ENCODE measurements at regions of chr6 and their contacts with region 1.

Region 1: DNA sequence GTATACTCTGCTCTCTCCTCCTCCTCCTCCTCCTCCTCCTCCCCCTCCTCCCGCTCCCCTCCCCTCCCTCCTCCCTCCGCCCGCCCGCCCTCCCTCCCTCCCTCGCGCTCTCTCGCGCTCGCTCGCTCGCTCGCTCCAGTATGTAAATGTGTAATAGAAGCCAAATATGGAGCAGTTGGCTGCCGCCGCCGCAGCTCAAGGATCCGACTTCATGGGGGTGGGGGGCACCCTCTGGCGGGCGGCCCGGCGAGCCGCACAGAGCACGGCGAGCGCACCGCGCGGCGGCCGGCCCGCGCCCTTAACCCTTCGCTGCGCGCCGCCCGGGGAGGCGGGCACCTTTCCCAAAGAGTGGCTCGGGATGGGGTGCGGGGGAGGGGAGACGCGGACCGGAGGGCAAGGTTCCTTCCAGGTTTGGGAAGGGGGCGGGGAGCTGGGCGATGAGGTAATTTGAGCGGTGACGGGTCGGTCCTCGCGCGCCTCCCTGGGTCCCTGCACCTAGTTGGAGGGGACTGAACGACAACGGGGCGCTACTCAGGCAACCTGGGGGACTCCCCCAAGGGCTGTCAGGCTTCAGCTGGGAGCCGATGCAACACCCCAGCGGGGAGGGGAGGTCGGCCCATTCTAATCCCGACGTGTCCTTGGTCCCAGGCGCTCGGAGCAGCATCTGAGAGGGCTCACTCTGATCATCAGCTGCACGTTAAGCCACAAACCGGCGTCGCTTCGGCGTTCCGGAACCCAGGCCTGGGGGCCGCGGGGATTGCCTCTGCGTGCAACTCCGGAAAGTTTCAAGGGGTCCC is 409 bp upstream of the ATXN1 start:
- DNase-seq: peak; percentile 90
- ATAC-seq: peak; percentile 64
- H3K4me3 Mint-ChIP-seq: peak overlapping the region; percentile 99
- H3K27ac Mint-ChIP-seq: peak overlapping the region; percentile 97
- H3K4me1 Mint-ChIP-seq: peaks cover 60% of the 10 kb centered on the region
- H3K27me3 Mint-ChIP-seq: no peaks in the 10 kb centered on the region

Region 2: GRCh38 chr6:16319813-16320532 is 441.7 kb before region 1 on chr6:
- CTCF ChIA-PET with region 1: interaction called, 24 read pairs
- POLR2A ChIA-PET with region 1: interaction called, 6 read pairs
- DNase-seq: peak; percentile 79
- ATAC-seq: peak; percentile 79
- H3K4me3 Mint-ChIP-seq: peak overlapping the region; percentile 61
- H3K27ac Mint-ChIP-seq: peak overlapping the region; percentile 94
- H3K4me1 Mint-ChIP-seq: peaks cover 76% of the 10 kb centered on the region
- H3K27me3 Mint-ChIP-seq: no peaks in the 10 kb centered on the region

Region 3: GRCh38 chr6:16420715-16421461 is 340.8 kb before region 1 on chr6:
- CTCF ChIA-PET with region 1: interaction called, 20 read pairs
- POLR2A ChIA-PET with region 1: interaction called, 4 read pairs
- DNase-seq: peak; percentile 46
- ATAC-seq: peak; percentile 90
- H3K4me3 Mint-ChIP-seq: peak overlapping the region; percentile 60
- H3K27ac Mint-ChIP-seq: peak overlapping the region; percentile 95
- H3K4me1 Mint-ChIP-seq: peaks cover 46% of the 10 kb centered on the region
- H3K27me3 Mint-ChIP-seq: no peaks in the 10 kb centered on the region

Region 4: GRCh38 chr6:16481697-16482399 is 279.8 kb before region 1 on chr6:
- CTCF ChIA-PET with region 1: interaction called, 12 read pairs
- POLR2A ChIA-PET with region 1: interaction called, 20 read pairs
- DNase-seq: peak; percentile 83
- ATAC-seq: peak; percentile 78
- H3K4me3 Mint-ChIP-seq: peak overlapping the region; percentile 26
- H3K27ac Mint-ChIP-seq: peak overlapping the region; percentile 93
- H3K4me1 Mint-ChIP-seq: peaks cover 80% of the 10 kb centered on the region
- H3K27me3 Mint-ChIP-seq: no peaks in the 10 kb centered on the region

Region 5: DNA sequence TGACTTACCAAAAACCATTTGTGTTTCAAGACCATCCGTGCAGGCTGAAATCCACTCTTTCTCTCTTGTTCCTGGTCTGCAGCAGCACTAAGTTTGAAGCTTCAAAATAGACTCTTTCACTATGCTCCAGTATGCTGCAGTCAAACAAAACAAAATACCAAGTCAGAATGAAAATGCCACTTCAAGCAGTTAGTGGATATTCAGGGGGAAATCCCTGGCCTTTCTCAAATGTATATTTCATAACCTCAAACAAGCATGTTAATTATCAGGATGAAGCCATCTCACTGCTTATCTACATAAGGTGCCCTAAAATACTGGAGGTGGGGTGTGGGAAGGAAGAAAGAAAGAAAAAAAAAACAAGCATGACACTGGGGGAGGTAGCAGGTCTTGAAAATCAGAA is 103.9 kb before region 1 on chr6:
- CTCF ChIA-PET with region 1: interaction called, 29 read pairs
- POLR2A ChIA-PET with region 1: interaction called, 14 read pairs
- DNase-seq: no peak
- ATAC-seq: peak; percentile 13
- H3K4me3 Mint-ChIP-seq: peak overlapping the region; percentile 16
- H3K27ac Mint-ChIP-seq: peak overlapping the region; percentile 76
- H3K4me1 Mint-ChIP-seq: peaks cover 62% of the 10 kb centered on the region
- H3K27me3 Mint-ChIP-seq: no peaks in the 10 kb centered on the region

Region 6: GRCh38 chr6:16723826-16724225 is 37.8 kb before region 1 on chr6:
- CTCF ChIA-PET with region 1: interaction called, 55 read pairs
- POLR2A ChIA-PET with region 1: interaction called, 6 read pairs
- DNase-seq: no peak
- ATAC-seq: no peak
- H3K4me3 Mint-ChIP-seq: no peak overlapping the region
- H3K27ac Mint-ChIP-seq: no peak overlapping the region
- H3K4me1 Mint-ChIP-seq: peaks cover 35% of the 10 kb centered on the region
- H3K27me3 Mint-ChIP-seq: no peaks in the 10 kb centered on the region

Region 7: DNA sequence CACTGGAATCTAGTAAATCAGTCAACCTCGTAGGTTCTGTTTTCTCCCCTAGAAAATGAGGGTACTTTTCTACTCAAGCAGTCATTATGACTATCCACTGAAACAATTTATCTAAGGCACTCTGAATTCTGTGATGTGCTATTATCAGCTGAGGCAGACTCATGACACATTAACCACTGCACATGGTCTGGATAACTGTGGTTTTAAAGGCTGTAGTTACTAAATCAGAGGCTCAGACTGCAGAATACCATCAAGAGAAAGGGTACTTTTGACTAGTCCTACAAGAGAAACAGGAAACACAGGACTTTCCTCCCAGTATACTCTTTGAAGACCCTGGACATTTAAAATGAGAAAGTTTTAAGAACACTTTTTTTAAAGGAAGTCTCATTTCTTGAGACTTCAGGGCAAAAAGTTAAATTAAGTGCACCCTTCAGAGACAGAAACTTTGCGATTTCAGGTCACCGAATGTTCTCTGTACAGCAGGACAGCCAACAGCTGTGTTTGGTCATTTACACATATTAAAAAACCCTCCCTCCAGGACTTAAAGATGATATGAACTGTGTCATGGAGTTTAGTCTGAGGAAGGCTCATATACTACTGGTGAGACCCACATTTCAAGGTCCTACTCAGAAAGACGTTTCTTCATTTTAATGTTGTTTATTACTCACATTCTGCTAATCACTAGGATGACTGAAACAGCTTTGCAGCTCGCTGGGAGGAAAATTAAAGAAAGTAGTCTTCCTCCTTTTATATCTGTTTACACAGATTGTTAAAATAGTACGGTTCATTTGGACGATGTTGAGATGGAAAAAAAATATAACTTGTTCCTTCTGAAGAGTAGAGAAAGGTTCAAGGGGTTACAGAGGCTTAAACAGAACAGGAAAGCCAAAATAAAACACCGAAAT is 20.3 kb before region 1 on chr6:
- CTCF ChIA-PET with region 1: interaction called, 44 read pairs
- POLR2A ChIA-PET with region 1: interaction called, 18 read pairs
- DNase-seq: no peak
- ATAC-seq: peak; percentile 74
- H3K4me3 Mint-ChIP-seq: no peak overlapping the region
- H3K27ac Mint-ChIP-seq: no peak overlapping the region
- H3K4me1 Mint-ChIP-seq: peaks cover 56% of the 10 kb centered on the region
- H3K27me3 Mint-ChIP-seq: no peaks in the 10 kb centered on the region